ENCODE measurements at regions of chr19 and their contacts with region 1.

Region 1: DNA sequence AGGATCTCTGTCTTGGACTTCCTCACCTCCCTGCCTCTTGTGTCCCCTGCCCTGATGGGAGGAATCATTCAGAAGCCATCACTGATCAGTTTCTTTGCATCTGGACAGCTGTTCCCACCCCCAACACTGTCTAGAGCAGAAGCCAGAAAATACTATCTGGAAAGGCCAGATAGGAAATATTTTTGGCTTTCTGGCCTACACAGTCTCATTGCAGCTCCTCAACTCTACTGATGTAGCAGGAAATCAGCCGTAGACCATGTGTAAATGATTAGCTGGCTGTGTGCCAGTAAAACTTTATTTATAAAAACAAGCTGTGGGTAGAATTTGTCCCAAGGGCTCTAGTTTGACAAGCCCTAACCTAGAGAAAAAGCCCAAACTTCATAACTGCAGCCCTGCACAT is 5.6 kb downstream of the SIGLEC7 start:
- DNase-seq: no peak
- H3K4me3 ChIP-seq: no peak overlapping the region
- H3K27ac ChIP-seq: no peak overlapping the region
- H3K4me1 ChIP-seq: no peaks in the 10 kb centered on the region
- H3K27me3 ChIP-seq: peaks cover 21% of the 10 kb centered on the region
- CTCF ChIP-seq: no peak
- EP300 ChIP-seq: no peak
- RAD21 ChIP-seq: no peak

Region 2: DNA sequence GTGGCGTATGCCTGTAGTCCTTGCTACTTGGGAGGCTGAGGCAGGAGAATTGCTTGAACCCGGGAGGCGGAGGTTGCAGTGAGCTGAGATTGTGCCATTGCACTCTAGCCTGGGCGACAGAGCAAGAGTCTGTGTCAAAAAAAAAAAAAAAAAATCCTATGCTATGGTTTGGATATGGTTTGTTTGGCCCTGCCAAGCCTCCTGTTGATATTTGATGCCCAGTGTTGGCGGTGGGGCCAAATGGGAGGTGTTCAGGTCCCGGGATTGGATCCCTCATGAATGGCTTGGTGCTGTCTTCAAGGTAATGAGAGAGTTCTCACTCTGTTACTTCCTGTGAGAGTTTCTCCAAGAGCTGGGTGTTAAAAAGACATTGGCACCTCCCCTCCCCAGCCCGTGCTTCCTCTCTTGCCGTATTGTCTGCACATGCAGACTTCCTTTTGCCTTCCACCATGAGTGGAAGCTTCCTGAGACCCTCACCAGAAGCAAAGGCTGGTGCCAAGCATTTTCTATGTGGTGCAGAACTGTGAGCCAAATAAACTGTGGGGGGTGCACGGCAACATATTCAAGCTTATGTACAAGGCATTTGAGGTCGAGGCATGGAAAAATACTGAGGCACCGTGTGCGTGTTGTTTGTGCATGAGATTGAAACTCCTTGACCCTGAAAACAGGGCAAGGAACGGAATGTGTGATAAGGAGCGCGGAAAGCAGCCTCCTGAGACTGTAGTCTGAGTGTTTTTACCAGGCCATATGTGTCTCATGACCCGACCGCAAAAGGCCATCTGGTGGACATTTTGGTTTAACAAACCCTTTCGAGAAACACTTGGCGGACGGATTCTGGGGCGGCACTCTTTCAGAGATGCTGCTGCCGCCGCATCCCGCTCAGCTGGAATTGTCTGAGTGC is 15.6 kb before region 1 on chr19:
- CTCF ChIA-PET with region 1: no interaction called
- POLR2A ChIA-PET with region 1: no interaction called
- DNase-seq: peak; percentile 34
- H3K4me3 ChIP-seq: no peak overlapping the region
- H3K27ac ChIP-seq: no peak overlapping the region
- H3K4me1 ChIP-seq: no peaks in the 10 kb centered on the region
- H3K27me3 ChIP-seq: peaks cover 42% of the 10 kb centered on the region
- CTCF ChIP-seq: peak; percentile 27; the same call in 1 of the 2 replicates
- EP300 ChIP-seq: no peak
- RAD21 ChIP-seq: no peak

Region 3: GRCh38 chr19:51158474-51159129 is 10.9 kb after region 1 on chr19:
- CTCF ChIA-PET with region 1: interaction called, 12 read pairs
- POLR2A ChIA-PET with region 1: no interaction called
- DNase-seq: peak; percentile 47
- H3K4me3 ChIP-seq: no peak overlapping the region; a peak in 1 of 4 replicates
- H3K27ac ChIP-seq: no peak overlapping the region
- H3K4me1 ChIP-seq: no peaks in the 10 kb centered on the region
- H3K27me3 ChIP-seq: peaks cover 28% of the 10 kb centered on the region
- CTCF ChIP-seq: peak; percentile 72
- EP300 ChIP-seq: no peak
- RAD21 ChIP-seq: peak; percentile 49

Measured in SK-N-SH (cell line).